Left cardiac atrium (tissue), 4 donors: ENCODE measurements at regions of chr4 and their contacts with region 1.

Region 1: DNA sequence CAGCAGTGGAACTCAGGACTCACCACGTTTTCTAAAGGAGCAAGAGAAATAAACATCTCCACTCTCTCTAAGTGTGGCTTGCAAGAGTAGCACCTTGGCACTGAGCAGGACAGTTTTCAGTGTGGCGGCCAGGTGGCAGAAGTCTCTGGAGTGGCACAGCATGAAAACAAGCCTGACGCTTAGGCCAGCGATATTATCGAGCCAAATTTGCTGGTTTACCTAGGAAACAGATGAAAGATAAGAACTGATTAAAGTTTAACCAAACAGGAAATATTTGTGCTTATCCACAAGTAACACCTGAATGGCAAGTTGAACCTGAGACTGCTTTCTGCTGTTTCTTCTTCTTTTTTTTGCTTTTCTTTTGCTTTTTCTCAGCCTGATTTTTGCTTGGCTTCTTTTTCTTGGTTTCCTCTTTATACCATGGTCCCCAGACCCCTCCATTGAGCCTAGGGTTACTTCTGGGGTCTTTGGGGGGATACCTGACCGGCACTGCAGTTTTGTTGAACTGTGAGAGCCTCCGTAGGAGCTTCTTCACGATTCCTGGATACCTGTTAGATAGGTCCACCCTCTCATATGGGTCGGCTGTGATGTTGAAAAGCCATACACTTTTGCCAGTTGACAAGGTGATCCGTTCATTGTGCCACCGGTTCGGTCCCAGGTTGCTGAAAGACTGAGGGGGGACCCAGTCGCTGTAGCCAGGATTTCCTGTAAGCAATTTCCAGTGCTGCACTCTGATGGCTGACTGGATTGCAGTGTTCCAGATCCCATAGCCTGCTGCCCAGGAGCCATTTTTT is 77.3 kb downstream of the ARSJ start:
- DNase-seq: no peak
- ATAC-seq: peak; percentile 22 to 63

Region 2: GRCh38 chr4:113468165-113469022 is 433.8 kb before region 1 on chr4:
- intact Hi-C with region 1: no loop called
- DNase-seq: peak; percentile 85
- ATAC-seq: peak; percentile 93 to 97

Region 3: DNA sequence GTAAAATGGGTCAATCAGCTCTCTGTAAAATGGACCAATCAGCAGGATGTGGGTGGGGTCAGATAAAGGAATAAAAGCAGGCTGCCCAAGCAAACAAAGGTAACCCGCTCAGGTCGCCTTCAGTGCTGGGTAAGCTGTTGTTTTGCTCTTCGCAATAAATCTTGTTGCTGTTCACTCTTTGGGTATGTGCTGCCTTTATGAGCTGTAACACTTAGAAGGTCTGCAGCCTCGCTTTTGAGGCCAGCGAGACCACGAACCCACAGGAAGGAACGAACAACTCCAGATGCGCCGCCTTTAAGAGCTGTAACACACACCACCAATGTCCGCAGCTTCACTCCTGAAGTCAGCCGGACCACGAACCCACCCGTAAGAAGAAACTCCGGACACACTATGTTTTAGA is 129.2 kb before region 1 on chr4:
- intact Hi-C with region 1: loop called in 1 of 2 experiments (anchors 10 kb)
- DNase-seq: no peak
- ATAC-seq: no peak

Region 4: GRCh38 chr4:113952452-113953029 is 50.4 kb after region 1 on chr4:
- intact Hi-C with region 1: no loop called
- DNase-seq: no peak
- ATAC-seq: peak; percentile 27 to 85

Region 5: GRCh38 chr4:113962719-113963265 is 60.6 kb after region 1 on chr4:
- intact Hi-C with region 1: no loop called
- DNase-seq: no peak
- ATAC-seq: no peak